ENCODE measurements at regions of chr14 and their contacts with region 1.

Region 1: DNA sequence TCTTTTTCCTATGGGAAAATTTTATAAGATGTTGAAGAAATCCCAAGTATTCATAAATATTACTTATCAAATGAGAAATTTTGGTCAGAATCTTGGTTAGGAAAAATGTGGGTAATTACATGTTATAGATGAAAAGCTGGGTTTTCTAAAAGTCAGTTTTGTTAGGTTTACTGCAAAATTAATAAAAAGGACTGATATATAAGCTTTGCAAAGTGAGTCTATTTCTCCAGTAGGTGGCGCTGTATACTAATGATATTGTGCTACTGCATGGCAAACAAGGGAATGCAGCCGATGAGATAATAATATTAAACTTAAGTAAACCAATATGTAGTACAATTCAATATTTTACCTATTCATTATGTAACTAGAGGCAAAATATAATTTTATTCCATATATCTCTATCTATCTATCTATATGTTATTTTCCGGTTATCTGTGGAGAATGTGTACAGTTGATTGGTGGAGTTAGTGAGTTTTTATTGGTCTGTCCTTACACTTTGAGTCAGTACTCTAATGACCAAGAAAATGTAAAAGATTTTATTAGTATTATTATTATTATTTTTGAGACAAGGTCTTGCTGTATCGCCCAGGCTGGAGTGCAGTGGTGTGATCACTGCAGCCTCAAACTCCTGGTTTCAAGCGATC is 32.9 kb downstream of the MIPOL1 start:
- DNase-seq: no peak
- H3K4me3 Mint-ChIP-seq: no peak overlapping the region
- H3K27ac Mint-ChIP-seq: no peak overlapping the region
- H3K4me1 Mint-ChIP-seq: no peaks in the 10 kb centered on the region
- H3K27me3 Mint-ChIP-seq: no peaks in the 10 kb centered on the region

Region 2: DNA sequence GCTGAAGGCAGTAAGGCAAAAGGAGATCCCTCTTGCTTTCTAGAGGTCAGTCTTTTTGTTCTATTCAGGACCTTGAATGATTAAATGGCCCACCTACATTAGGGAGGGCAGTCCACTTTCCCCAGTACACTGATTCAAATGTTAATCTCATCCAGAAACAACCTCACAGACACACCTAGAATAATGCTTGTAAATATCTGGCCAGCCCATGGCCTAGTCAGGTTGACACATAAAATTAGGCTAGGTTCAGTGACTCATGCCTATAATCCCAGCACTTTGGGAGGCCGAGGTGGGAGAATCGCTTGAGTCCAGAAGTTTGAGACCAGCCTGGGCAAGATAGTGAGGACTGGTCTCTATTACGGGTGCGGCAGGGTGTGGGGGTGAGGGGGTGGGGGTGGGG is 10.5 kb after region 1 on chr14:
- CTCF ChIA-PET with region 1: interaction called, 26 read pairs
- POLR2A ChIA-PET with region 1: no interaction called
- intact Hi-C with region 1: no loop called
- DNase-seq: no peak
- H3K4me3 Mint-ChIP-seq: no peak overlapping the region
- H3K27ac Mint-ChIP-seq: no peak overlapping the region
- H3K4me1 Mint-ChIP-seq: no peaks in the 10 kb centered on the region
- H3K27me3 Mint-ChIP-seq: no peaks in the 10 kb centered on the region

Region 3: DNA sequence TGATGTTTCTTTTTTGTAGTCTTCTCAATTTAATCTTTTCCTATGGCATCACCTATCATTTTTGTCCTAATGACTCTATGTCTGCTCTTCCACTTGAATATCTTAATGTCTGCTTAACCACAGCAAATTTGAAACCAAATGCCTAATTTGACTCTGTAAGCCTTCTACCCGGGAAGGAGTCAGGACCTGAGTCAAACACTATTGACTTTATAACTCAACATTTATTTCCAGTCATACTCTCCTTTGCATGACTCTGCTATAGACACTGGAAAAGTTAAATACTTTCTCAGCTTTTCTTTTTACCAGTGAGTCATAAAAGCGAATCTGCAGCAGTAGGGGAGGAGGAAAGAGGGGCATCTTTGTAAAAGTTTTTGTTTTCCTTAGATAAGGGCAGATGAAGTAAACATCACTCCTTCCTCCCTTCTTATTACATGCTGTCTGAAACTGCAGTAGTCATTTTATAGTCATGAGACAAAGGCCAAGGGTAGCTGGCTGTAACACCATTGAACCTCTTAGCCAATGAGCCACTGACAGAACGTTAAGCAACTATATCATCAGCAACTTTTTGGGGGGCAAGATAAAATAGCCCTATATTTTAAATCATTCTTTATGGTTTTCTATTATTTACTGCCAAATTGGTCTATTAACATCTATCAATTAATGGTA is 146.4 kb after region 1 on chr14:
- CTCF ChIA-PET with region 1: no interaction called
- POLR2A ChIA-PET with region 1: no interaction called
- intact Hi-C with region 1: no loop called
- DNase-seq: no peak
- H3K4me3 Mint-ChIP-seq: no peak overlapping the region
- H3K27ac Mint-ChIP-seq: no peak overlapping the region
- H3K4me1 Mint-ChIP-seq: no peaks in the 10 kb centered on the region
- H3K27me3 Mint-ChIP-seq: no peaks in the 10 kb centered on the region